ENCODE measurements at regions of chr16 and their contacts with region 1.

Region 1: DNA sequence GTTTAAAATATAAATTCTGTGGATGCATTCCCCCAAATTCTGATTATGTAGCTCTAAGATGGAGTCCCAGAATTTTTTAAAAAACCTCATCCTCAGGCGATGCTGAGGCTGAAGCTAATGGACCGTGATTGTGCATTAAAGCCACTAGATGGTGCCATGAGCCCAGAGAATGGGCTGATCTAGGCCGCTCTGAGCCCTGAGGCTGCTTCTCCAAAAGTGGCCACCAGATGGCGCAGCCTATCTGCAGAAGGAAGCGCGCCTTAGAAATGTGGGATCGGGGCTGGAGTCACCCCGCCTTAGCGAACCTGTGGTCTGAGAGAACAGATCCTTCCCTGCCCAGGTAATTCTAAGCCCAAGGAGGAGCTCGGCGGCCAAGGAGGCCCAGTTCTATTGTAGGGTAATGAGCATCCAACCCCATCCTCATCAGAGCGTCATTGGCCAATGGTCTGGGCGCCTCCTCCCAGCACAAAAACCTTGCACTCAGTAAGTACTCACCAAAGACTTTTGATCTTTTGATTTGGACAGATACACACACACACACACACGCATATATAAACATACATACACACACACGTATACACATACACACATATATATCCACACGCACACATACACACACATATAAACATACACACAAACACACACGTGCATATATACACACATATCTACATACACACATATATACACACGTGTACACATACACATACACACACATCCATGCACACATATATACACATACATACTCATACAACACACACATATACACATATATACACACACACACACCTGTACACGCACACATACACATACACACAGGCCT is 13.7 kb upstream of the MMP2 start:
- DNase-seq: peak; percentile 90 to 94 (median 91)
- ATAC-seq: peak; percentile 88
- H3K4me3 ChIP-seq: no peak overlapping the region
- H3K27ac ChIP-seq: no peak overlapping the region
- H3K4me1 ChIP-seq: peaks cover 5% of the 10 kb centered on the region
- H3K27me3 ChIP-seq: no peaks in the 10 kb centered on the region
- CTCF ChIP-seq: peak; percentile 99 to 100 (median 100)
- POLR2A ChIP-seq: no peak

Region 2: DNA sequence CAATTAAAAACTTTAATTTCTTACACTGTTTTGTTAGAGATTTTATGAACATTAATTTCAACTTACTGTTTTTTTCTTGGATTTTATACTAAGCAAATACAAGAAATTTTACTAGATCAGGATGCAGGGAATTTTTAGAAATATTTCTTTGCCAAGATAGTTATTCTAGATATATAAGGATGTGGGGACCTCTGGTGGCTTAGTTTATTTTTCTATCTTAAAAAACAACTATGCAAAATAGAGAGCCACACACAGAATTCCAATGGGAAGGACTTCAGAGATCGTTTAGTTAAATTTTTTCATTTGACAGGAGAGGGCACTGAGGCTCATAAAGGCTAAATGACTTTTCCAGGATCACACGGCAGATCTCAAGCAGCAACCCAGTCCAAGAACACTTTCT is 78.2 kb after region 1 on chr16:
- intact Hi-C with region 1: loop called (anchors 5 kb)
- DNase-seq: no peak
- ATAC-seq: no peak
- H3K4me3 ChIP-seq: no peak overlapping the region
- H3K27ac ChIP-seq: no peak overlapping the region
- H3K4me1 ChIP-seq: no peaks in the 10 kb centered on the region
- H3K27me3 ChIP-seq: no peaks in the 10 kb centered on the region
- CTCF ChIP-seq: peak in 6 of 7 experiments; percentile 21 to 60 (median 53)
- POLR2A ChIP-seq: no peak

Region 3: GRCh38 chr16:55697867-55698266 is 232.6 kb after region 1 on chr16:
- intact Hi-C with region 1: loop called (anchors 5 kb)
- DNase-seq: no peak
- ATAC-seq: no peak
- H3K4me3 ChIP-seq: no peak overlapping the region
- H3K27ac ChIP-seq: no peak overlapping the region
- H3K4me1 ChIP-seq: no peaks in the 10 kb centered on the region
- H3K27me3 ChIP-seq: no peaks in the 10 kb centered on the region
- CTCF ChIP-seq: no peak
- POLR2A ChIP-seq: no peak

Region 4: DNA sequence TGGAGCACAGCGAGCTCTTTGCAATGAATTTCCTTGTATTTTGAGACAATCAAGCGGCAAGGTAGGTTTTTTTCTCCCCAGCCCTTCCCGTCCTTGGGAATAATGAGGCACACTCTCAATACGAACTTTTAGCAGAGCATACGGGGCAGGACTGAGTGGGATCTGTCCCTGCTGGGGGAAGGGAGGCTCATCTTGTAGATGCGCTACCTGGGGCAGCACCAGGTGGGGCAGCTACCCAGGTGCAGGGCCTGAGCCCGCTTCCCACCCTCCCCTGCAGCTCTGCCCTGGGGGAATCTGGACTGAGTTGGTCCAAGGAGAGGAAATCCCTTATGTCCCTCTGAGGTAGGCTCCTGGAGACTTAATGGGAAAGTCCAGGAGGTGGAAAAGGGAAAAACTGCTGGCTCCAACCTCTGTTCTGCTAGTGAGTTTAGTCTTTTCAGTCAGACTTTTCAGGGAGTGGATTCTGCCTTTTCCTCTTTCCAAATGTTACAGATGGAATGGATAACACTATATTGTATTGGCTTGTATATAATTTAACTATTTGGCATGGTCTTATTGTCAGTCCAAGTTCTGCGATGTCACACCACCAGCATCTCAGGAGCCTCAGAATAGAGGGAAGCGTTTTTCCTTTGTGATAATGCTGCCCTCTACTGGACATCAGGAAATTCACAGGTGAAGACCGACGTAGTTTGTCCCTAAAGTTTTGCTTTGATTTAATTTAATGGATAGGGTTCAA is 377.2 kb after region 1 on chr16:
- intact Hi-C with region 1: loop called (anchors 10 kb)
- DNase-seq: peak; percentile 23 to 35 (median 28)
- ATAC-seq: peak; percentile 38
- H3K4me3 ChIP-seq: no peak overlapping the region
- H3K27ac ChIP-seq: no peak overlapping the region
- H3K4me1 ChIP-seq: no peaks in the 10 kb centered on the region
- H3K27me3 ChIP-seq: no peaks in the 10 kb centered on the region
- CTCF ChIP-seq: peak; percentile 60 to 84 (median 80)
- POLR2A ChIP-seq: no peak

Region 5: DNA sequence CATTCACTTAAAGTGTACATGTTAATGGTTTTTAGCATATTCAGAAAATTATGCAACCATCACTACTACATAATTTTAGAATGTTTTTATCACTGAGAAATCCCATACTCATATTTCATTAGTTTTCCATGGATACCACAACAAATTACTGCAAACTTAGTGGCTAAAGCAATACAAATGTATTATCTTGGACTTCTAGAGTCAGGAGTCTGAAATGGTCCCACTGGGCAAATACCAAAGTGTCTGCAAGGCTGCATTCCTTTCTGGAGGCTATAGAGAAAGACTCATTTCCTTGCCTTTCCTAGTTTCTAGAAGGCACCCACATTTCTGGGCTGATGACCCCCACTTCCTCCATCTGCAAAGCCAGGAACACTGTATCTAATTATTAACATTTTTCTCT is 709.1 kb after region 1 on chr16:
- intact Hi-C with region 1: no loop called
- DNase-seq: no peak
- ATAC-seq: no peak
- H3K4me3 ChIP-seq: no peak overlapping the region
- H3K27ac ChIP-seq: no peak overlapping the region
- H3K4me1 ChIP-seq: no peaks in the 10 kb centered on the region
- H3K27me3 ChIP-seq: no peaks in the 10 kb centered on the region
- CTCF ChIP-seq: no peak
- POLR2A ChIP-seq: no peak